ENCODE measurements at regions of chr6 and their contacts with region 1.

Region 1: GRCh38 chr6:128327890-128328289 is 192.5 kb downstream of the PTPRK start:
- DNase-seq: peak; percentile 12
- H3K4me3 ChIP-seq: no peak overlapping the region
- H3K27ac ChIP-seq: no peak overlapping the region
- H3K4me1 ChIP-seq: peaks cover 0 to under 1% (median 0%) of the 10 kb centered on the region in 4 donors
- H3K27me3 ChIP-seq: no peaks in the 10 kb centered on the region
- CTCF ChIP-seq: peak; percentile 13 to 39 (median 32)
- EP300 ChIP-seq: no peak
- POLR2A ChIP-seq: no peak

Region 2: GRCh38 chr6:128379577-128379976 is 51.7 kb after region 1 on chr6:
- in situ Hi-C with region 1: no loop called
- intact Hi-C with region 1: no loop called
- DNase-seq: no peak
- H3K4me3 ChIP-seq: no peak overlapping the region
- H3K27ac ChIP-seq: no peak overlapping the region
- H3K4me1 ChIP-seq: no peaks in the 10 kb centered on the region
- H3K27me3 ChIP-seq: no peaks in the 10 kb centered on the region
- CTCF ChIP-seq: no peak
- EP300 ChIP-seq: no peak
- POLR2A ChIP-seq: no peak

Region 3: DNA sequence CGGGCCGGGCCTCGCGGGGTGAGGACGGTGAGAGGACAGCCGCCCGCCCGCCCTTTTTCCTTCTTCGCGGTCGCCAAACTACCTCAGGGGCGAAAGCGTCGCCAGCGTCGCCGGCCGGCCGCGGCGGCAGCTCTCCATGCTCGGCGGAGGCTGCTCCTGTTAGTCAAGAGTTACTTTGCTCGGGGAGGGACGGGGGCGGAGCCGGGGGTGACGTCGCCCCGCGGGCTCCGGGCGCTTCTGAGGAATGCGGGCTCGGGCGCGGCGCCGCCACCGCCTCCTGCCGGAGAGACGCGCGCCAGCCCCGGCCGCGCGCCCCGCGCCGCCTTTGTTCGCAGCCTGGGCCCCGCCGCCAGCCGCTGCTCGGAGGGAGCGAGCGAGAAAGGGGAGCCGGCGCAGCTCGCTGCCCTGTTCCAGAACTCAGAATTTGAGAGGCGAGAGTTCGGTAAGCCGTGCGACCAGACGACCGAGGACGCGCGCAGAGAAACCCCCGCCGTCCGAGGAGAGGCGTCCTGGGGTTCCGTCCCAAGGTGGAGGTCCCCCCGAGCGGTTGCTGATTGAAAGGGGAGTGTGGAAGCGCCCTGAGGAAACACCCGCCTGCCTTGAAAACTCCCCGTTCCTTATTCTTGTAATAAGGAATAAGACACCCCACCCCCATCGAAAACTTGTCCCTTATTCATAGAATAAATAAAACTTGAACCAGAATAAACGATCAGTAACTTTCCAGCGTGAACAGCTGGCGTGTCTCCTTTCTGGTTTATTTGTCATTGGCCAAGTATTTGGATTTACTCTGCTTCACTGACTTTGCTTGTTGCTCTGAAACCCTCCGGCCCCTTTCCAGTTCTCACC is 192.8 kb after region 1 on chr6 and contains the start of gene PTPRK:
- in situ Hi-C with region 1: loop called in 1 of 4 experiments (anchors 25 kb)
- intact Hi-C with region 1: no loop called
- DNase-seq: peak; percentile 94
- H3K4me3 ChIP-seq: peak within 1 kb of the TSS; percentile 84 to 95 (median 88)
- H3K27ac ChIP-seq: peak within 1 kb of the TSS; percentile 94 to 97 (median 96)
- H3K4me1 ChIP-seq: peaks cover 13 to 32% (median 21%) of the 10 kb centered on the region in 4 donors
- H3K27me3 ChIP-seq: peaks cover 4% of the 10 kb centered on the region
- CTCF ChIP-seq: peak; percentile 31 to 62 (median 49)
- EP300 ChIP-seq: no peak
- POLR2A ChIP-seq: peak; percentile 97
- total RNA-seq, gene PTPRK: 88.0 to 187 (median 136) TPM

Region 4: DNA sequence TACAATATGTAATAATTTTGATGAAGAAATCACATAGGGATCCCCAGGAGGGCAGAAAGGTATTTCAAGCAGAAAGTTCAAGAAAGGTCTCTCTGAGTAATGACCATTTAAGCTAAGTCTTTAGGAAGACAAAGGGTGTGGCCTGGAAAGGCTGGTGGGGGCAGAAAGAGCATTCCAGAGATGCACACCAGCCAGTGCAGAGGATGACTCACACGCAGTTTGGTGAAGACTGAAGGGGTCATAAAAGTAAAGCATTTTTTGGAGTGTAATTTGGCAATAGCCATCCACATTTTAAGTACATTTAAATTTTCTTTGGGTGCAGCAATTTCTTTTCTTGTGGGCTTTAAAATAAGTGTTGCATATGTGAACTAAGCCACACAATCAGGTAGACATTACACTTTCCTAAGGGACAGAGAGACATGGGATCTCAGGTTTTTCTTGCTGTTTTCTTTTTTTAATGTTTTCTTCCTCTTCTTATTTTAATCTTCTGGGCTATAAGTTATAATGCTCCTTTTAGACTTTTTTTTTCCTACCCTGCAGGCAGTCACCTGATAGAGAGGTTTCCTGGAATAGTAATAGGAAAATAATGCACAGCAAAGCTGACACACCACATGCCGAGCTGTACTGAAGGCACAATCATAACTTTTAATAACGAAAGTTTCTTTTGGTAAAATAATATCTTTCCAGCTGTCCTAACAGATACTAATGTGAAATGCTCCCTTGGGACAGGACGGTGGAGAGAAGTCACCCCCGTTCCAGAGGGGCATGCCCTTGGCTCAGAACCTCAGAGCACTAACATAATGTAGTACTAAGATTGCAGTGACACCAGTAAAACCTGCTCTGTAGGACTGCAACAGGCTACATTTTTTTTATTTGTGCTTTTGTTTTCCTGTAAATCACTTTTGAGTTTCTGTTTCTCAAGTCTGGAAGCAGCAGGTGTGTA is 242.1 kb after region 1 on chr6:
- in situ Hi-C with region 1: no loop called
- intact Hi-C with region 1: no loop called
- DNase-seq: no peak
- H3K4me3 ChIP-seq: no peak overlapping the region
- H3K27ac ChIP-seq: no peak overlapping the region
- H3K4me1 ChIP-seq: peaks cover 0 to 18% (median 9%) of the 10 kb centered on the region in 4 donors
- H3K27me3 ChIP-seq: no peaks in the 10 kb centered on the region
- CTCF ChIP-seq: no peak
- EP300 ChIP-seq: no peak
- POLR2A ChIP-seq: no peak